Natural killer cell (primary cell): ENCODE measurements at regions of chrX and their contacts with region 1.

Region 1: GRCh38 chrX:79146640-79147390 is 2.3 kb downstream of the GPR174 start:
- DNase-seq: peak in 1 of 2 donors; percentile 54
- ATAC-seq: peak; percentile 11 to 38 (median 20)
- H3K4me3 ChIP-seq: peak overlapping the region; percentile 86
- H3K4me3 Mint-ChIP-seq: peak overlapping the region; percentile 100
- H3K27ac ChIP-seq: peak overlapping the region; percentile 55
- H3K27ac Mint-ChIP-seq: peak overlapping the region; percentile 90 to 99
- H3K4me1 ChIP-seq: peaks cover 20% of the 10 kb centered on the region
- H3K4me1 Mint-ChIP-seq: peaks cover 44 to 60% of the 10 kb centered on the region in 2 donors
- H3K27me3 ChIP-seq: no peaks in the 10 kb centered on the region
- H3K27me3 Mint-ChIP-seq: no peaks in the 10 kb centered on the region
- CTCF ChIP-seq: no peak

Region 2: GRCh38 chrX:78945186-78945912 is 201.5 kb before region 1 on chrX and contains the start of gene P2RY10:
- intact Hi-C with region 1: loop called (anchors 10 kb)
- DNase-seq: peak in 1 of 2 donors; percentile 81
- ATAC-seq: peak; percentile 80 to 84 (median 83)
- H3K4me3 ChIP-seq: peak within 1 kb of the TSS; percentile 71
- H3K4me3 Mint-ChIP-seq: peak within 1 kb of the TSS; percentile 88
- H3K27ac ChIP-seq: peak within 1 kb of the TSS; percentile 80
- H3K27ac Mint-ChIP-seq: peak within 1 kb of the TSS; percentile 90 to 93
- H3K4me1 ChIP-seq: peaks cover 4% of the 10 kb centered on the region
- H3K4me1 Mint-ChIP-seq: peaks cover 45 to 52% of the 10 kb centered on the region in 2 donors
- H3K27me3 ChIP-seq: no peaks in the 10 kb centered on the region
- H3K27me3 Mint-ChIP-seq: peaks cover 4 to 18% of the 10 kb centered on the region in 2 donors
- CTCF ChIP-seq: no peak
- total RNA-seq, gene P2RY10: 17.4 to 21.5 (median 19.7) TPM

Region 3: GRCh38 chrX:79107891-79108718 is 38.7 kb before region 1 on chrX:
- intact Hi-C with region 1: loop called (anchors 5 kb)
- DNase-seq: peak in 1 of 2 donors; percentile 78
- ATAC-seq: peak; percentile 89 to 94 (median 92)
- H3K4me3 ChIP-seq: no peak overlapping the region
- H3K4me3 Mint-ChIP-seq: peak overlapping the region; percentile 62
- H3K27ac ChIP-seq: peak overlapping the region; percentile 100
- H3K27ac Mint-ChIP-seq: peak overlapping the region; percentile 88 to 96
- H3K4me1 ChIP-seq: peaks cover 5% of the 10 kb centered on the region
- H3K4me1 Mint-ChIP-seq: peaks cover 29 to 36% of the 10 kb centered on the region in 2 donors
- H3K27me3 ChIP-seq: no peaks in the 10 kb centered on the region
- H3K27me3 Mint-ChIP-seq: peaks cover 0 to 8% of the 10 kb centered on the region in 2 donors
- CTCF ChIP-seq: no peak

Region 4: DNA sequence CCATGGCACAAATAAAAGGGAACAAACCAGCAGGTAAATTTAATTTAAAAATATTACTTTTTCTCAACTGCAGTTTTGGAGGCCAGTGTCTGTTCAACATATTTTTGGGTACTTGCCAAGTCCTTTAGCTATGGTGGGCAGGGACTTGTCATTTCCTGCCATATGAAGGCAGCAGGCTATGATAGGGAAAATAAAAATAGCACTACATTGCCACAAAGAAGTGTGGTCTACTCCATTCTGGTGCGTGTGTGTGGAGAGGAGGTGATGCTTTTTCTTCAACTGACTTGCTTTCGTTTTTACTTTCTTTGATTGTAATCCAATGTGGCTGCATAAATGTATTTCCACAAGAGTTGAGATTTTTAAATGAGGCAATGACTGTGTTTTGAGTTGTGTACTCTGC is 14.8 kb after region 1 on chrX:
- intact Hi-C with region 1: loop called (anchors 2 kb)
- DNase-seq: peak; percentile 23 to 86
- ATAC-seq: peak; percentile 87 to 99 (median 96)
- H3K4me3 ChIP-seq: peak overlapping the region; percentile 30
- H3K4me3 Mint-ChIP-seq: peak overlapping the region; percentile 90
- H3K27ac ChIP-seq: peak overlapping the region; percentile 91
- H3K27ac Mint-ChIP-seq: peak overlapping the region; percentile 93 to 96
- H3K4me1 ChIP-seq: peaks cover 14% of the 10 kb centered on the region
- H3K4me1 Mint-ChIP-seq: peaks cover 52 to 61% of the 10 kb centered on the region in 2 donors
- H3K27me3 ChIP-seq: no peaks in the 10 kb centered on the region
- H3K27me3 Mint-ChIP-seq: no peaks in the 10 kb centered on the region
- CTCF ChIP-seq: no peak

Region 5: DNA sequence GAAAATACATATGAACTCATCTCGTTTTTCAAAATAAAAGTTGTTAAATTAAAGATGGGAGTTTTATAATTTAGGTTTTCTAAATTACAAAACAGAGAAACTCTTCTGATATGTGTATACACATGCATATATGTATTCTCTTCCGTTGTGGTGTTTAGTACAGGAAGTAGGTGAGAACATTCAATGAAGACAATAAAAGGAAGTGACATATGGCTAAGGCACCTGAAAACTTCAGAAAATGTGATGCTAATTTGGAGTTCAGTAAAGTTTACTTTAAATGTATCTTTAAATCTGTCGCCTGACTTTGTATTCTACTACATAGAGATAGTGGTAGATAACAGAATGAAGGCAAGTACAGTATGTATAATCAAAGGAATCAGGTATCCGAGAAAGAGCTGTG is 253.8 kb after region 1 on chrX:
- intact Hi-C with region 1: loop called (anchors 10 kb)
- DNase-seq: peak in 1 of 2 donors; percentile 19
- ATAC-seq: peak; percentile 47 to 68 (median 49)
- H3K4me3 ChIP-seq: no peak overlapping the region
- H3K4me3 Mint-ChIP-seq: peak overlapping the region; percentile 60
- H3K27ac ChIP-seq: peak overlapping the region; percentile 25
- H3K27ac Mint-ChIP-seq: peak overlapping the region; percentile 77 to 78
- H3K4me1 ChIP-seq: peaks cover 5% of the 10 kb centered on the region
- H3K4me1 Mint-ChIP-seq: peaks cover 4 to 7% of the 10 kb centered on the region in 2 donors
- H3K27me3 ChIP-seq: no peaks in the 10 kb centered on the region
- H3K27me3 Mint-ChIP-seq: no peaks in the 10 kb centered on the region
- CTCF ChIP-seq: no peak